A549 (cell line): ENCODE measurements at regions of chr5 and their contacts with region 1.

Region 1: GRCh38 chr5:169980418-169981053 is at the start of gene INSYN2B:
- DNase-seq: peak; percentile 81 to 86
- ATAC-seq: peak; percentile 94 to 97
- H3K4me3 ChIP-seq: peak within 1 kb of the TSS; percentile 38
- H3K27ac ChIP-seq: peak within 1 kb of the TSS; percentile 34 to 72; a peak in 5 of 6 replicates
- H3K4me1 ChIP-seq: peaks cover 18% of the 10 kb centered on the region
- CTCF ChIP-seq: peak; percentile 97
- EP300 ChIP-seq: no peak
- POLR2A ChIP-seq: no peak
- RAD21 ChIP-seq: peak; percentile 66 to 85
- polyA plus RNA-seq, gene INSYN2B: 0.26 and 0.38 TPM in 2 replicates

Region 2: DNA sequence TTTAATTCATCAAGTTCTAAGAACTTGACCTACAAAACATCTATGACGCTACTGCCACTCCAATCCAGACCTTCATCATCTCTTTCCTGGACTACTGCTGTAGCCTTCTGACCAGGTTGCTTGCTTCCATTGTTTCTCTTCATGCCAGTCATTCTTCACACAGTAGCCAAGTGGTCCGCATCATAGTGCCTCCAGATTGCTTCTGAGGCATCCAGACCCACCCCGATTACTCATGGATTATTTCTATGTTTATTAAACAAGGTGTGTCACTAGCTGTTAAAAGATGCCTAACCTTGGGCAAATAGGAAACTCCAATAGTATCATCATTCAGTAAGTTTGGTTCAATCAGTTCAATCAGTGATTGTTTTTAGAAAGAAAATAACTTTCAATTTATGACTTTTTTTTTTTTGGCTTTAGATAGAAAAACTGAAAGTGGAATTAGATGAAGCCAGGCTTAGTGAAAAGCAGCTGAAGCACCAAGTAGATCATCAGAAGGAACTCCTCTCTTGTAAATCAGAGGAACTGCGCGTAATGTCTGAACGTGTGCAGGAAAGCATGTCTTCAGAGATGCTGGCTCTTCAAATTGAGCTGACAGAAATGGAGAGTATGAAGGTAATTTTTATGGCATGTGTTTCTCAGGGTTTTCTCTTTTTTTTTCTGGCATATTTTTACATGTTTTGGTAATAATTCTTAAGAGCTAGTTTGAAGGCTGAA is 387.4 kb before region 1 on chr5:
- CTCF ChIA-PET with region 1: interaction called, 12 read pairs
- POLR2A ChIA-PET with region 1: no interaction called
- DNase-seq: peak; percentile 77 to 92
- ATAC-seq: peak; percentile 89 to 96
- H3K4me3 ChIP-seq: no peak overlapping the region
- H3K27ac ChIP-seq: peak overlapping the region; percentile 65 to 82
- H3K4me1 ChIP-seq: peaks cover 81% of the 10 kb centered on the region
- CTCF ChIP-seq: no peak
- EP300 ChIP-seq: no peak
- POLR2A ChIP-seq: no peak
- RAD21 ChIP-seq: no peak

Region 3: DNA sequence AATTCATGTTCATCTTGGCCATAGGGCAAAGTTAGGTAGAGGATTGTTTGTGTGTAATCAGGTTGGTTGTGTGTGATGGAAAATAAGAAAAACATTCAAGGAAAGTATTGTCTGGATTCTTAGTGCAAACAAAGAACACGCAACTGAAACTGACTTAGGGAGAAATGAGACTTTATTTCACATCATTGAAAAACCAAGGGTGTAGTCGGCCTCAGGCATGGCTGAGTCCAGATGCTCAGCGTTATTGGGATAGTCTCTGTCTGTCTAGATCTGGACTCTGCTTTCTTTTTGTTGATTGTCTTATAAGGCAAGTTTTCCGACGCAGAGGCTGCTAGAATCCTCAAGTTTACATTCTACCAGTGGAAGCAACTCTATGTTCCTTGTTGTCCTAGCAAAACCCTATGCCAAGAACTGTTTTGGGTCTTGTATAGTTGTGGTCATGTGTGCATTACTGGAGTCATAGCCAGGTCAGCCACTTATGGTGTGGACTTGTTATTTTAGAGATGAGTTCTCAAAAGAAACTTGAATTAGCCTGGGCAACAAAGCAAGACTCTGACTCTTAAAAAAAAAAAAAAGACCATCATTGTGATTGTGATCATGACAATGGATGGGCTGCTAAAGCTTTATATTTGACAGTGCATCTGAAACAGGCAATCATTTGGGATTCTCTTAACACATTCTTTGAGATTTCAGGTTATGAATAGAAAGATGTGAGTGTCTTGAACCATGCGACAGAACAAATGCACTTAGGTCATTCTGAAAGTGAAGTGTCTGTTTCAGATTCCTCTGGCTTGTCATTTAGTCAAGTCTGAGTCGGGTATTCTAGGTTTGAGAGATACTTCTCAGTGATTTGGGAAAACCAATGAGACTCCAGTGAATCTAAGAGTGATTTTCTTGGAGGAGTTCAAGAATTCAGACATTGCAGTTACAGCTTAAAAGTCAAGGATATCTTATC is 260.9 kb before region 1 on chr5:
- CTCF ChIA-PET with region 1: interaction called, 11 read pairs
- POLR2A ChIA-PET with region 1: no interaction called
- DNase-seq: no peak
- ATAC-seq: no peak
- H3K4me3 ChIP-seq: no peak overlapping the region
- H3K27ac ChIP-seq: no peak overlapping the region
- H3K4me1 ChIP-seq: no peaks in the 10 kb centered on the region
- CTCF ChIP-seq: no peak
- EP300 ChIP-seq: no peak
- POLR2A ChIP-seq: no peak
- RAD21 ChIP-seq: no peak

Region 4: DNA sequence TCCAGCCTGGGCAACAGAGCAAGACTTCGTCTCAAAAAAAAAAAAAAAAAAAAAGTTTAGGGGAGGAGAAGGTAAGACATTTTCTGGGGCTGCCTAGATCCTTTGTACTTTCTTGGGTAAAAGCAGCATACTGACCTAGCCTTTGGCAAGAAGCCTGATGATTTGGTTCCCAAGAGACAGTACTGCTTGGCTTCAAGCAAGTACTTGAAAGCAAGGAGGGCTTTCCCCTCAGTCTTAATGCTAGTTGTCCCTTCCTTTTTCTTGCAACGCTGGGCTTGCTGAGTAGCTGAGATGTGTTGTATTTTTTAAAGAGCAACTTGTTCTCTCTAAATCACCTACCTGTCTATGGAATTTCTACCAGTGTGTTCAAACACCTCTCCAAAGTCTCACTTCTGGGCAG is 76.5 kb before region 1 on chr5:
- CTCF ChIA-PET with region 1: interaction called, 10 read pairs
- POLR2A ChIA-PET with region 1: no interaction called
- DNase-seq: no peak
- ATAC-seq: no peak
- H3K4me3 ChIP-seq: no peak overlapping the region
- H3K27ac ChIP-seq: no peak overlapping the region
- H3K4me1 ChIP-seq: no peaks in the 10 kb centered on the region
- CTCF ChIP-seq: no peak
- EP300 ChIP-seq: no peak
- POLR2A ChIP-seq: no peak
- RAD21 ChIP-seq: no peak

Region 5: GRCh38 chr5:169956756-169957155 is 23.8 kb before region 1 on chr5:
- CTCF ChIA-PET with region 1: interaction called, 11 read pairs
- POLR2A ChIA-PET with region 1: no interaction called
- DNase-seq: no peak
- ATAC-seq: no peak
- H3K4me3 ChIP-seq: no peak overlapping the region
- H3K27ac ChIP-seq: no peak overlapping the region
- H3K4me1 ChIP-seq: no peaks in the 10 kb centered on the region
- CTCF ChIP-seq: no peak
- EP300 ChIP-seq: no peak
- POLR2A ChIP-seq: no peak
- RAD21 ChIP-seq: no peak

Region 6: GRCh38 chr5:170008376-170008775 is 27.8 kb after region 1 on chr5:
- CTCF ChIA-PET with region 1: interaction called, 13 read pairs
- POLR2A ChIA-PET with region 1: no interaction called
- DNase-seq: no peak
- ATAC-seq: no peak
- H3K4me3 ChIP-seq: no peak overlapping the region
- H3K27ac ChIP-seq: no peak overlapping the region
- H3K4me1 ChIP-seq: no peaks in the 10 kb centered on the region
- CTCF ChIP-seq: no peak
- EP300 ChIP-seq: no peak
- POLR2A ChIP-seq: no peak
- RAD21 ChIP-seq: no peak

Region 7: GRCh38 chr5:170225326-170226128 is 245.0 kb after region 1 on chr5:
- CTCF ChIA-PET with region 1: no interaction called
- POLR2A ChIA-PET with region 1: no interaction called
- DNase-seq: peak; percentile 66 to 68
- ATAC-seq: peak; percentile 82 to 96; a peak in 4 of 6 replicates
- H3K4me3 ChIP-seq: no peak overlapping the region
- H3K27ac ChIP-seq: no peak overlapping the region
- H3K4me1 ChIP-seq: peaks cover 1% of the 10 kb centered on the region
- CTCF ChIP-seq: peak; percentile 85
- EP300 ChIP-seq: no peak
- POLR2A ChIP-seq: no peak
- RAD21 ChIP-seq: peak; percentile 86 to 90